Posterior vena cava (tissue), 2 donors: ENCODE measurements at regions of chr3 and their contacts with region 1.

Region 1: DNA sequence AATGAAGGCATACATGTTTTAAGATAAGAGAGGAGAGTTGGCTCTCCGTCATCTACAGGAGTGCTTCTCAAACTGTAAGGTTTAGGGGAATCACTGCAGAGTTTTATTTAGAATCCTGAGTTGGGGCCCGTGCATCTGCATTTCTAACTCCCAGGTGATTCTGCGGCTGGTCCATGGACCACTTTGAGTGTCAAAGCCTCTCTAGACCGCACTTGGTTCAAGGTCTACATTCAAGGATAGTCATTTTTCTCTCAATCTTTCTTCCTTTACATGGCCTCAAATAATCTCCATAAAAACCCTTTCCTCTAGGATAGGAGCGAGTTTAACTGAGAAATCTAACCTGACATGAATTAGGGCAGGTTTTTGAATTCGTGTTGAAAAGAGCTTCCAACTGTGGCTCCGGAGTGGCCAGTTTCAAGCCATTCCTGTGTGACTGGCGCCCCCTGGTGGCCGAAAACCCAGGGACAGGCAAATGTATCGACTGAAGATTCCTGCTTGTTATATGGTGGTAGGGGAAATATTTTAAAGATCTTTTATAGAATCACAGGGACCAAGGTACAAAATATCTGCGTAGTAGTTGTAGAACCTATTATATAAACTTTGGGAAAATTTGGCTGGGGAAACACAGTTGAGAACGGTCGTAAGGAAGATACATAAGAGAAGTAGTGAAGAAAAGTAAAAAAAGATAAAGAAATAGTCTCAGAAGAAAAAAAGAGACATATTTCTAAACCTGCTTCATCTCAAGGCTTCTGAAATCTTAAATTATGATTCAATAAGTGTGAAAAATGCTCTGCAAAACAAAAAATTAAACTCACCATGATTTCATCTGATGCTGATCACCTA is 11.9 kb downstream of the GABRR3 start:
- DNase-seq: peak; percentile 97

Region 2: DNA sequence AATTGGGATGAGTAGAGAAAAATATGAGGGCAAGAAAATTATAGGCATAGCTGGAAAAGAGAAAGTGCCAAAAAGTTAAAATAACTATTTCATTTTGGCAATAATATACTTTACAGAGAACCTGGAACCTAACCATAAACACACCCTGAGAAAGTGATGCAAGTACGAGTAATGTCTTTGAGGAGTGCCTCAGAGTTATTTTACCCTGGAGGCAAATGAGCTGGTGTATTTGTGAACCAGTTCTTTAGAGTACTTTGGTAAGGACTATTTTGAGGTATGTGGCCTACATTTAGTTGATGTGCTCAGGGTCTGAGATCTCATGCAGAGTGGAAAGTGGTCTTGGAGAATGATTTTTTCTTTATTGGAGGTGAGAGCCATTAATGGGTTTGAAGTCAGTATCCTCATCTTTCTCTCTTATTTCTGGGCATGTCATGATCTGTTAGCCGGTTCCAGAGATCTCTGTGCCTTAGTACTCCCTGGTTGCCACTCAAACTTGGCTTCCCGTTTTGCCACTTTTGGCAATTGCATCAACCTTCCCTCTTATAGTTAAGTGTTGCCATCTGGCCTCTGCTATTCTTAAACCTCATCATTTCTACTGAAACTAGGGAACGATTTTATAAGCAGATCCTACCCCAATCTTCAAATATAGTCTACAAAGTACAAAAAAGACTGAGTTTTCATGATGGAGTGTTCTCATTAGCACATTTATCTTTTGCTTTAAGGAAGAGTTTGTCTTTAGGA is 1063.1 kb before region 1 on chr3:
- intact Hi-C with region 1: no loop called
- DNase-seq: no peak

Region 3: GRCh38 chr3:97793420-97794019 is 229.7 kb before region 1 on chr3:
- intact Hi-C with region 1: loop called in 1 of 2 experiments (anchors 5 kb)
- DNase-seq: no peak